Endothelial cell of umbilical vein (primary cell): ENCODE measurements at regions of chr4 and their contacts with region 1.

Region 1: DNA sequence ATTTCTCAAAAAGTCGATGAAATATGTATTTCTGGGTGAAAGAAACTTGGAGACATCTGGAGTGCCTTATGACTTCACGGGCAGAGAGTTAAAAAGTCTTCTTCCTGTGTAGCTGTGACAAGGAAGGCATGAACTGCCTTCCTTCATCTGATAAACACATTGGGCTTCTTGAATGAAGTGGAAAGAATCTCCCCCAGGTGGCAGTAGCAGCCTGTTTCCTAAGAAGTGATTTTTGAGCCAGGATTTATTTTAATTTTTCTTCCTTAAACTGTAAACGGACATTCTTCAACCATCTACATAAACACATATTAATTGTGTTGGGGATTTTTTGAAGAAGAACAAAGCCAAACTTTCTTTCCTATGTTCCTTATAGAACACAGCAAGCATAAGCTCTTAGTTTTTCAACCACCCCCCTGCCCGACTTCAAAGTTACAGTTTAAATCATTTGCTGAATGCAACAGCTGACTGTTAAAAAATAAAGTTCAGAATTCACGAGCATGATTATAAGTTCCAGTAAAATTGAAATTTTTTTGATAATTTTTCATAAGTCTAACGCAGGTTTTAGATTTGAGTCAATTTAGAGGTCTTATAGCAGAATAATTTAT is 980 bp upstream of the GIMD1 start:
- DNase-seq: peak; percentile 85
- H3K4me3 ChIP-seq: no peak overlapping the region
- H3K27ac ChIP-seq: no peak overlapping the region
- H3K4me1 ChIP-seq: peaks cover 19% of the 10 kb centered on the region
- H3K27me3 ChIP-seq: no peaks in the 10 kb centered on the region
- CTCF ChIP-seq: peak; percentile 58 to 60
- POLR2A ChIP-seq: no peak

Region 2: DNA sequence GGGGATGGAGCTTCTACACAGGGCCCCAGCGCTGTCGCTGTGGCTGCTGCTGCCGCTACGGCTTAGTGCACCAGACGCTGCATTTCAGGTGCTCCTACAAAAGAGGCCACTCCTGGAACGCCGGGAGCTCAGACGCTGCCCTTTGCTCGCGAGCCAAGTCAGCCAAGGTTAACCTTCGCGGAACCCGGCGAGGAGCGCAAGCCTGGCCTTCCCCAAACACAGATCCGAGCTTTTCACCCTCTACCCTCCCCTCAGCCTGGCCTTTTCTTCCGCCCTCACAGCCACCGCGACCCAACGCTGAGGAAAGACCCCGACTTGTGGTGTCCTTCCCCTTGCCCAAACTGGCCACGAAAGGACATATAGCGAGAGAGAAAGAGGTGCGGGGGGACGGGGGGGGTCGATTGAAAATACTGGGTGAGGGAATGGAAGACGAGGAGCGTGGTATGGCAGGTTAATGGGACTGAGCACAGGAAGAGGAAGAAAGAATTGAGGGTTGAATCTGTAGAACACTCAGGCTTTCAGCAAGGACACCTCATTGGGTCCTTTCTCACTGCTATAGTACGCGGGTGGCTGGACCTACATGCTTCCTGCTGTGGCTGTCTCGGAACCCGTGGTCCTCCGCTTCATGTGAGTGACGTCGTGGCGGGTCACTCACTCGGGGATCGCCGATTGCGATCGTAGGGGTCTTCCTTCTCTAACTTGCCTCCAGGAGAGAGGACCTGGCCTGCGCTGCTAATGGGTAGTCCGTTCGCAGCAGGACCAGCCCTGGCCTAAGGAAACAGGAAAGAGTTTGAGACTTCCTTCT is 53.4 kb before region 1 on chr4 and contains the starts of genes AIMP1 and TBCK:
- CTCF ChIA-PET with region 1: no interaction called
- POLR2A ChIA-PET with region 1: no interaction called
- dilution Hi-C with region 1: no loop called
- intact Hi-C with region 1: loop called (anchors 1 kb)
- DNase-seq: peak; percentile 92
- H3K4me3 ChIP-seq: peak within 1 kb of the TSS; percentile 49 to 96 (median 83)
- H3K27ac ChIP-seq: peak within 1 kb of the TSS; percentile 92
- H3K4me1 ChIP-seq: peaks cover 20% of the 10 kb centered on the region
- H3K27me3 ChIP-seq: no peaks in the 10 kb centered on the region
- CTCF ChIP-seq: no peak
- POLR2A ChIP-seq: peak; percentile 78
- total RNA-seq, gene AIMP1: 42.4 and 44.7 TPM in 2 replicates
- total RNA-seq, gene TBCK: 29.0 and 38.6 TPM in 2 replicates

Region 3: GRCh38 chr4:106380179-106380578 is 10.6 kb after region 1 on chr4:
- CTCF ChIA-PET with region 1: interaction called, 13 read pairs
- POLR2A ChIA-PET with region 1: no interaction called
- dilution Hi-C with region 1: no loop called
- intact Hi-C with region 1: no loop called
- DNase-seq: no peak
- H3K4me3 ChIP-seq: no peak overlapping the region
- H3K27ac ChIP-seq: no peak overlapping the region
- H3K4me1 ChIP-seq: no peaks in the 10 kb centered on the region
- H3K27me3 ChIP-seq: no peaks in the 10 kb centered on the region
- CTCF ChIP-seq: no peak
- POLR2A ChIP-seq: no peak

Region 4: GRCh38 chr4:106690487-106690886 is 320.9 kb after region 1 on chr4:
- CTCF ChIA-PET with region 1: interaction called, 15 read pairs
- POLR2A ChIA-PET with region 1: no interaction called
- dilution Hi-C with region 1: no loop called
- intact Hi-C with region 1: loop called (anchors 5 kb)
- DNase-seq: peak; percentile 86
- H3K4me3 ChIP-seq: no peak overlapping the region
- H3K27ac ChIP-seq: peak overlapping the region; percentile 79
- H3K4me1 ChIP-seq: peaks cover 18% of the 10 kb centered on the region
- H3K27me3 ChIP-seq: no peaks in the 10 kb centered on the region
- CTCF ChIP-seq: no peak
- POLR2A ChIP-seq: no peak

Region 5: DNA sequence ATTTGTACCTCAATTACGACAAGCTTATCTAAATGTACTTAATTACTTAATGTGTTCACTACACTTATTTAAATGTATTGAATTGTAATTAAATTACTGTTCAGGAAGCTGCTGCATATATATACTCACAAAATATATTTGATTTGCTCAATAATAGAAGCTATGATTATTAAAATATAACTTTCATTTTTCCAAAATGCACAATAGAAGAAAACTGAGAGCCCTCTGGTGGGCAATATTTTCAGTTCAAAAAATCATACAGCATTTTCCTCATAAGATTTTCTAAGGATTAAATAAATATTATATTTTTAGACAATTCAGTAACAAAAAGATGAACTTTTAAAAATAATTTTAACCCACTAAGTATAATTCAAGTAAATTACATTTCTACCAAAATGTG is 449.2 kb after region 1 on chr4:
- CTCF ChIA-PET with region 1: interaction called, 55 read pairs
- POLR2A ChIA-PET with region 1: no interaction called
- dilution Hi-C with region 1: no loop called
- intact Hi-C with region 1: loop called (anchors 1 kb)
- DNase-seq: no peak
- H3K4me3 ChIP-seq: no peak overlapping the region
- H3K27ac ChIP-seq: no peak overlapping the region
- H3K4me1 ChIP-seq: no peaks in the 10 kb centered on the region
- H3K27me3 ChIP-seq: no peaks in the 10 kb centered on the region
- CTCF ChIP-seq: no peak
- POLR2A ChIP-seq: no peak

Region 6: DNA sequence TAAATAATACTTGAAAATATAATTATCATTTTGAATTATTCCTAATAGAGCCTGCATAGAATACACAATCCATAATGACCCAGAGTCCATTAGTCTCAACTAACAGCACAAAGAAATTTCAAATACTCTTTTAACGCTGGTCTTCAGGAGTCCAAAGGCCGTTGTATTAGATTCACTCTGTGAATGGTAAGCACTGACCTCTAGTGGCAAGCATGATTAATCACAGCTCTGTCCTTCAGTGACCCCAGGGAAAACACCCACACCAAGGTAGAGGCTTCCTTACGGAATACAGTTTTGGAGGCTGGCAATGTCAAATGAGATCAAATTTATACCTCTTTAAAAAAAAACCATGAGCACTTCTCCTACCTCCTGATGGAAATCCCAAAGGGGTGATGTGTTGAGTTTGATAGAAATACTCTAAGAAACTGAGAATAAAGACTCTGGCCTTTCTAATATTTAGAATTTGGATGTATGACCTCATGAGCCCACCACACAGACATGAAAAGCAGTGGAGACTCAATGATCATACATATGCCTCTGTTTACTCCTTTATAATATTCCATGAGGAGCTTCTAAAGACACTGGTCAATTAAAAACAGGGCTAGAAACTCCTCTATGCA is 813.7 kb after region 1 on chr4:
- CTCF ChIA-PET with region 1: interaction called, 8 read pairs
- POLR2A ChIA-PET with region 1: no interaction called
- dilution Hi-C with region 1: no loop called
- intact Hi-C with region 1: loop called (anchors 2 kb)
- DNase-seq: peak; percentile 69
- H3K4me3 ChIP-seq: no peak overlapping the region
- H3K27ac ChIP-seq: no peak overlapping the region
- H3K4me1 ChIP-seq: no peaks in the 10 kb centered on the region
- H3K27me3 ChIP-seq: no peaks in the 10 kb centered on the region
- CTCF ChIP-seq: peak; percentile 63 to 70
- POLR2A ChIP-seq: no peak